CD8-positive, alpha-beta T cell (primary cell): ENCODE measurements at regions of chr1 and their contacts with region 1.

Region 1: DNA sequence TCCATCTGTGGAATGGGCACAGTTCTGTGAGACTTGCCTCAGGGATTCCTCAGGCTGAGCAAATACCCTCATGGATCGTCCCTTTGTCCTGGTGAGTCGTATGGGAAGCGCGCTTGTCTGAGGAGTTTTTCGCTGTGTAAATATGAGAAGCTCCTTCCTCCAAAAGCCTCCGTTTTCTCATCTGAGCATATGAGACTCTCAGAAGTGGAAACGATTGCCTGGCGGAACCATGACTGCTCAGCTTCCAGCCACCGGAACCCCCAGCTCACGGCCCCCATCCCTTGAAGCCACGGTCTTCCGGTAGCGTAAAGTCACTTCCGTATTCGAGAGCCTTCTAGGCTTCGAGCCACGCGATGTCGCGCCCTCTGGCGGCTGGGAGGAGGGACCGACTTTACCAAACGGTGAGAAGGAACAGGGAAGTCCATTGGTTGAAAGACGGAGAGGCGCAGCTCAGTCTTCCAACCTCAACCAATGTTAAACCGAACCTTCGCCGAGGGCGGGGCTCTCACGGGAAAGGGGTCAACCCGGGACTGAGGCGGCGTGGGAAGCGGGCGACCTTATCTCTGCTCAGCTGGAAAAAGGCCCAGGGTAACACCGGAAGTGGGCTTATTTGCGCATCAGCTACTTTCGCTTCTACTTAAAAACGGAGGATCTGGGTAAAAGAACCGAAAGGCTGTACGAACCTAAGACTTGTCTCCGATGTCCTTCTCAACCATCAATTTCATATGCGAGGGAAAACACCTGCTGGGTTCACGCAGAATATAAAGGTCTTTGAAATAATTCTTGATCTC is 46.2 kb downstream of the AZIN2 start:
- DNase-seq: peak; percentile 95 to 100 (median 99)
- ATAC-seq: peak; percentile 92
- H3K4me3 ChIP-seq: peak overlapping the region; percentile 61 to 74
- H3K4me3 Mint-ChIP-seq: peak overlapping the region; percentile 93
- H3K27ac ChIP-seq: peak overlapping the region; percentile 68 to 96
- H3K27ac Mint-ChIP-seq: peak overlapping the region; percentile 92
- H3K4me1 ChIP-seq: peaks cover 26% of the 10 kb centered on the region
- H3K4me1 Mint-ChIP-seq: peaks cover 52% of the 10 kb centered on the region
- H3K27me3 ChIP-seq: no peaks in the 10 kb centered on the region
- H3K27me3 Mint-ChIP-seq: no peaks in the 10 kb centered on the region
- CTCF ChIP-seq: peak; percentile 90

Region 2: GRCh38 chr1:31644560-31645273 is 1482.5 kb before region 1 on chr1 and contains the start of gene PEF1:
- CTCF ChIA-PET with region 1: no interaction called
- POLR2A ChIA-PET with region 1: no interaction called
- intact Hi-C with region 1: loop called in 1 of 2 experiments (anchors 10 kb)
- DNase-seq: peak; percentile 99 to 100 (median 99)
- ATAC-seq: peak; percentile 91
- H3K4me3 ChIP-seq: peak within 1 kb of the TSS; percentile 92 to 97
- H3K4me3 Mint-ChIP-seq: peak within 1 kb of the TSS; percentile 100
- H3K27ac ChIP-seq: peak within 1 kb of the TSS; percentile 99
- H3K27ac Mint-ChIP-seq: peak within 1 kb of the TSS; percentile 100
- H3K4me1 ChIP-seq: peaks cover 30% of the 10 kb centered on the region
- H3K4me1 Mint-ChIP-seq: peaks cover 40% of the 10 kb centered on the region
- H3K27me3 ChIP-seq: no peaks in the 10 kb centered on the region
- H3K27me3 Mint-ChIP-seq: no peaks in the 10 kb centered on the region
- CTCF ChIP-seq: no peak
- total RNA-seq, gene PEF1: 35.8 to 36.6 TPM

Region 3: GRCh38 chr1:32933742-32934322 is 193.4 kb before region 1 on chr1:
- CTCF ChIA-PET with region 1: interaction called, 4 read pairs
- POLR2A ChIA-PET with region 1: interaction called, 3 read pairs
- intact Hi-C with region 1: loop called in 1 of 2 experiments (anchors 1 kb)
- DNase-seq: no peak
- ATAC-seq: no peak
- H3K4me3 ChIP-seq: no peak overlapping the region
- H3K4me3 Mint-ChIP-seq: no peak overlapping the region
- H3K27ac ChIP-seq: no peak overlapping the region
- H3K27ac Mint-ChIP-seq: no peak overlapping the region
- H3K4me1 ChIP-seq: no peaks in the 10 kb centered on the region
- H3K4me1 Mint-ChIP-seq: no peaks in the 10 kb centered on the region
- H3K27me3 ChIP-seq: no peaks in the 10 kb centered on the region
- H3K27me3 Mint-ChIP-seq: no peaks in the 10 kb centered on the region
- CTCF ChIP-seq: no peak

Region 4: GRCh38 chr1:33036526-33037503 is 90.4 kb before region 1 on chr1 and contains the start of gene AK2:
- CTCF ChIA-PET with region 1: no interaction called
- POLR2A ChIA-PET with region 1: no interaction called
- intact Hi-C with region 1: loop called (anchors 1 kb)
- DNase-seq: peak; percentile 72 to 95 (median 86)
- ATAC-seq: peak; percentile 99
- H3K4me3 ChIP-seq: peak within 1 kb of the TSS; percentile 87 to 92
- H3K4me3 Mint-ChIP-seq: peak within 1 kb of the TSS; percentile 98
- H3K27ac ChIP-seq: peak within 1 kb of the TSS; percentile 57 to 76
- H3K27ac Mint-ChIP-seq: peak within 1 kb of the TSS; percentile 92
- H3K4me1 ChIP-seq: peaks cover 24% of the 10 kb centered on the region
- H3K4me1 Mint-ChIP-seq: peaks cover 45% of the 10 kb centered on the region
- H3K27me3 ChIP-seq: no peaks in the 10 kb centered on the region
- H3K27me3 Mint-ChIP-seq: no peaks in the 10 kb centered on the region
- CTCF ChIP-seq: no peak
- total RNA-seq, gene AK2: 24.3 to 24.9 TPM

Region 5: DNA sequence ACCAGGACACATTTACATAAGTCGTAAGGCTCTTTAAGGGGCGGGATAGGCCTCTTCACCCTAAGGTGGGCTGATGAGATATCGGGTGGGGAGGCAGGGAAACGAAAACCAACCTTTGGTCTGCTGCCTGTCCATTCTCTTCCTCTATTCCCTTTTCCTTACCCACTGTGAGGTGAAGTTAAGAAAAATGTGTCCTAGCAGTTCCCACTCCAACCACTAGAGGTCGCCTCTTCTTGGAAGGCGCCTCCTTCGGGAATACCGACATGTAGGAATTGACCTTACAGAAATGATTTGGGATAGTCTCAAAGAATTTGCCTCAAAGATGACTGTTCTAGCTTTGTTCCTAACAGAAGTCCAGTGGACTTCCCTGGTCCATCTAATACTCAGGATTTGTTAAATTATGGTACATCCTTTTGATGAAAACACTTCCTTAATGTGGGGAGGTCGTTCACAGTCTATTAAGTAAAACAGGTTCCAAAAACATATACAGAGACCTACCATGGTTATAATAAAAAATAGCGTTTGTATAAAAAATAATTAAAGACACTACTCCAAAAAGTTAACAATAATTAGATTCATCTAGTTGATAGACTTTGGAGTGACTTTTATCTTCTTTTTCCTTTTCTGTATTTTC is 32.1 kb before region 1 on chr1:
- CTCF ChIA-PET with region 1: interaction called, 33 read pairs
- POLR2A ChIA-PET with region 1: interaction called, 19 read pairs
- intact Hi-C with region 1: loop called (anchors 1 kb)
- DNase-seq: peak in 4 of 9 experiments; percentile 29 to 53 (median 36)
- ATAC-seq: no peak
- H3K4me3 ChIP-seq: no peak overlapping the region
- H3K4me3 Mint-ChIP-seq: no peak overlapping the region
- H3K27ac ChIP-seq: no peak overlapping the region
- H3K27ac Mint-ChIP-seq: no peak overlapping the region
- H3K4me1 ChIP-seq: peaks cover 44% of the 10 kb centered on the region
- H3K4me1 Mint-ChIP-seq: peaks cover 37% of the 10 kb centered on the region
- H3K27me3 ChIP-seq: no peaks in the 10 kb centered on the region
- H3K27me3 Mint-ChIP-seq: no peaks in the 10 kb centered on the region
- CTCF ChIP-seq: peak; percentile 79

Region 6: DNA sequence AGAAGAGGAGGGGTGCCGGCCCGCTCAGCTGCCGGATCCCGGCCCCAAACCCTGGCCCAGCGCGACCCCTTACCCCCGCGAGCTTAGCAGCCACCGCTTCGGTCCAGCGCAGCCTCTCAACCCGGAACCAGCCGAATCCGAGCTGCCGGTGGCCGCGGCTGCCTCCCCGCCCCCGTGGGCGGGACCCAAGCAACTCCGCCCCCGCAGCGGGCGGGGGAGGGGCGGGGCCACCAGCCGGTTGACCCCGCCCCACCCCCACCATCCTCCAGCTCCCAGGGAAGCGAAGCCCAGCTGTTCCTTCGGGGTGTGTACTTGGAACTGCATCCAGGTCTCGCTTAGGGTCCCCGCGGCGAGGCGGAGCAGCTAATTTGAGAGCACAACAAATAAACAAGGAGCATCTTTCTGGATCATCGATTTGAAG is 54.7 kb after region 1 on chr1 and contains the start of gene TRIM62:
- CTCF ChIA-PET with region 1: interaction called, 13 read pairs
- POLR2A ChIA-PET with region 1: interaction called, 20 read pairs
- intact Hi-C with region 1: loop called (anchors 1 kb)
- DNase-seq: peak; percentile 48 to 88 (median 74)
- ATAC-seq: peak; percentile 74
- H3K4me3 ChIP-seq: peak within 1 kb of the TSS; percentile 82 to 85
- H3K4me3 Mint-ChIP-seq: peak within 1 kb of the TSS; percentile 88
- H3K27ac ChIP-seq: peak within 1 kb of the TSS in 1 of 2 experiments; percentile 36
- H3K27ac Mint-ChIP-seq: peak within 1 kb of the TSS; percentile 74
- H3K4me1 ChIP-seq: peaks cover 22% of the 10 kb centered on the region
- H3K4me1 Mint-ChIP-seq: peaks cover 31% of the 10 kb centered on the region
- H3K27me3 ChIP-seq: no peaks in the 10 kb centered on the region
- H3K27me3 Mint-ChIP-seq: peaks cover 6% of the 10 kb centered on the region
- CTCF ChIP-seq: no peak
- total RNA-seq, gene TRIM62: 14.3 to 14.8 TPM

Region 7: GRCh38 chr1:33349778-33350610 is 222.8 kb after region 1 on chr1:
- CTCF ChIA-PET with region 1: no interaction called
- POLR2A ChIA-PET with region 1: no interaction called
- intact Hi-C with region 1: loop called (anchors 1 to 5 kb)
- DNase-seq: peak; percentile 64 to 92 (median 75)
- ATAC-seq: peak; percentile 86
- H3K4me3 ChIP-seq: peak overlapping the region; percentile 82 to 93
- H3K4me3 Mint-ChIP-seq: peak overlapping the region; percentile 91
- H3K27ac ChIP-seq: peak overlapping the region; percentile 63 to 75
- H3K27ac Mint-ChIP-seq: peak overlapping the region; percentile 76
- H3K4me1 ChIP-seq: peaks cover 32% of the 10 kb centered on the region
- H3K4me1 Mint-ChIP-seq: peaks cover 48% of the 10 kb centered on the region
- H3K27me3 ChIP-seq: no peaks in the 10 kb centered on the region
- H3K27me3 Mint-ChIP-seq: no peaks in the 10 kb centered on the region
- CTCF ChIP-seq: no peak

Region 8: GRCh38 chr1:33360367-33360766 is 233.2 kb after region 1 on chr1:
- CTCF ChIA-PET with region 1: no interaction called
- POLR2A ChIA-PET with region 1: no interaction called
- intact Hi-C with region 1: no loop called
- DNase-seq: no peak
- ATAC-seq: no peak
- H3K4me3 ChIP-seq: no peak overlapping the region
- H3K4me3 Mint-ChIP-seq: no peak overlapping the region
- H3K27ac ChIP-seq: no peak overlapping the region
- H3K27ac Mint-ChIP-seq: no peak overlapping the region
- H3K4me1 ChIP-seq: no peaks in the 10 kb centered on the region
- H3K4me1 Mint-ChIP-seq: no peaks in the 10 kb centered on the region
- H3K27me3 ChIP-seq: no peaks in the 10 kb centered on the region
- H3K27me3 Mint-ChIP-seq: no peaks in the 10 kb centered on the region
- CTCF ChIP-seq: no peak

Region 9: DNA sequence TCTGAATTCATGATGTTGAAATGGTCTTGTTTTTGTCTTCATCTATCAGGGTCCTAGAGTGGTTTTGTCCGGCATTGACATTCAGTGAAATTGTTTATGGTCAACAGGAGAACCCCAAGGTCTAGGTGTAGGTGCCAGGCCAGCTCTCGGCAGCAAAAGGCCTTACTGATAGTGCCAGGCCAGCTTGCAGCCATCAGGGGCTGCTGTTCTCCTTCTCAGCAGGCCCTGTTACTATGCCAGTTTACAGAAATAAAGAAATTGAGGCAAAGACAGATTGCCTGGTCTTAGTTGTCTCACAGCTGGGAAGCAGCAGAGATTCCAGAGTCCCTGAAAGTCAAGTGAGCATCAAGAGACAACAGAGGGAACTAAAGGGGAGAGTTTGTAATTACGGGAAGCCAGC is 748.7 kb after region 1 on chr1:
- CTCF ChIA-PET with region 1: no interaction called
- POLR2A ChIA-PET with region 1: no interaction called
- intact Hi-C with region 1: no loop called
- DNase-seq: no peak
- ATAC-seq: no peak
- H3K4me3 ChIP-seq: no peak overlapping the region
- H3K4me3 Mint-ChIP-seq: no peak overlapping the region
- H3K27ac ChIP-seq: no peak overlapping the region
- H3K27ac Mint-ChIP-seq: no peak overlapping the region
- H3K4me1 ChIP-seq: no peaks in the 10 kb centered on the region
- H3K4me1 Mint-ChIP-seq: no peaks in the 10 kb centered on the region
- H3K27me3 ChIP-seq: no peaks in the 10 kb centered on the region
- H3K27me3 Mint-ChIP-seq: peaks cover 20% of the 10 kb centered on the region
- CTCF ChIP-seq: no peak